A673 (cell line): ENCODE measurements at regions of chr1 and their contacts with region 1.

Region 1: GRCh38 chr1:60090655-60091054 is 17.1 kb upstream of the C1orf87 start:
- DNase-seq: no peak
- H3K4me3 ChIP-seq: no peak overlapping the region
- H3K27ac ChIP-seq: no peak overlapping the region
- H3K4me1 ChIP-seq: no peaks in the 10 kb centered on the region
- H3K27me3 ChIP-seq: no peaks in the 10 kb centered on the region
- CTCF ChIP-seq: no peak

Region 2: DNA sequence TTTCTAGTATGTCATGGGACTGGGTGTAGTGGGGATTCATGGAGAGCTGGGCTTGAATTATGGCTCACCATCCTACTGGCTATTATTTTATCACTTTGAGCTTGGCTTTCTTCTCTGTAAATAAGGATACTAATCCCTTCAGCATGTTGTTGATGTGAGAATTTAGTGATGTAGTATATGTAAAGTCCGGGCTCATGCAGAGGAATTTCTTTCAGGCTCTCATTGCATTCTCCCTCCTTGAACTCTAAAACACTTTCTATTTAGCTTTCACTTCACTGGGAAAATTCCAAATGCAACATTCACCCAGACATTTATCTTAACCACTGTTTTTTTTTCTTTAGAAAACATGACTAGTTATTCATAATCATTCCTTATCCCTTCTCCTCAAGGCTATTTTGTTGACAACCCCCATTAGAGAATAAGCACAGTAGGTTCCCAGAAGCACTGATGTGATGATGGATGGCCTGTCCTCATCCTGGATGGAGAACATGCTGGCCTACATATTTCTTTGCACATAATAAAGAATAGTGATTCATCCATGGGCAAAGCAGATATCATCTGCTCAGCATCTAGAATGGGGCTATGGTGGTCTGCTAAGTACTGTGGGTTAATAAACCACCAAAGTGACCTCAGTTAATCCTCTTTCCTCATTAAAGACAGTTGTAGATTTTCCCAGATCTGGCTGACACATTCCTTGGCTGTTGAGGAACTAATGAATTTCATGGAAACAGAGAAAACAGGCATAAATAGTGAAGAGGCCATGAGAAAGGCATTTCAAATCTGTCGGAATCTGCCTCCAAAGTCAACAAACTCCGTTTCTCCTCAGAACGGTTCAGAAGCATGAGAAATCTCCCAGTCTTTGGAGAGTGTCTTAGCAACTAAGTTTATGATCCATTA is 96.1 kb before region 1 on chr1:
- CTCF ChIA-PET with region 1: no interaction called
- POLR2A ChIA-PET with region 1: no interaction called
- intact Hi-C with region 1: no loop called
- DNase-seq: no peak
- H3K4me3 ChIP-seq: no peak overlapping the region
- H3K27ac ChIP-seq: no peak overlapping the region
- H3K4me1 ChIP-seq: peaks cover 7% of the 10 kb centered on the region
- H3K27me3 ChIP-seq: no peaks in the 10 kb centered on the region
- CTCF ChIP-seq: no peak

Region 3: DNA sequence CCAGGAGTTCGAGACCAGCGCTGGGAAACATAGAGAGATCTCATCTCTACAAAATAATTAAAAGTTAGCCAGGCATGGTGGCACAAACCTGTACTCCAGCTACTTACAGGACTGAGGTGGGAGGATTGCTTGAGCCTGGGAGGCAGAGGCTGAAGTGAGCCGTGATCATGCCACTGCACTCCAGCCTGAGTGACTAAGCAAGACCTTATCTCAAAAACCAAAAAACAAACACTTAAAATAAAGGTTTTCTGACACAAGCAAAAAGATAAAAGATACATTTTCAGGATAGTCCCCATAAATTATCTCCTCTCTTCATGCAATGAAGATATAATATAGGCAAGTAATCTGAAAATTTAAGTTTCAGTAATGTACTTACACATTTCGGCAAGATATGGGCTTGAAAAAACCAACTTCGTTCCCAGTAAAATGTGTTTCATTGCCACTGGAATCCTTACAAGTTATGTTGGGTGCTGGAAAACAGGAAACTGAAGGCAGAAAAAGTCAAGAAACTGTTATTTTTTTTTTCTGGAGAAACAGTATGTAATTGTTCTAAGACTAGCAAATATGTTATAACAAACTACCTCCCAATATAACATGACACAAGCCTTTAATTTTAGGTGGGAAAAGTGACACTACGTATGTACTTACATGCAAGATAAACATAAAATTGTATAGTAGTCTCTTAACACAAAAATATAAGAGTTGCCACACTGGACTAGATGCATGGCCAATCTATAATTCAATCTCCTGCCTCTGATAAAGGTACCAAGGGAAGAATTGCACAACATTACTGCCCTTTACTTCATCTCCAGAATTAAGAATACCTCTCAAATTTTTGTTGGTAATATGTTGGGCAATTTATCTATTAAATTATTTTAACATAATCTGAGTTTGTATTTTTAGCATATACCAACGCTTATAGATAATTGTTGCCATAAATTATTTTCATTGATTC is 1618.6 kb after region 1 on chr1:
- CTCF ChIA-PET with region 1: no interaction called
- POLR2A ChIA-PET with region 1: interaction called, 11 read pairs
- intact Hi-C with region 1: no loop called
- DNase-seq: no peak
- H3K4me3 ChIP-seq: no peak overlapping the region
- H3K27ac ChIP-seq: no peak overlapping the region
- H3K4me1 ChIP-seq: no peaks in the 10 kb centered on the region
- H3K27me3 ChIP-seq: no peaks in the 10 kb centered on the region
- CTCF ChIP-seq: no peak